CD4-positive, alpha-beta memory T cell (primary cell): ENCODE measurements at regions of chr5 and their contacts with region 1.

Region 1: GRCh38 chr5:157431544-157432200 is 28.3 kb upstream of the NIPAL4 start:
- DNase-seq: peak; percentile 49 to 63 (median 59)
- H3K4me3 ChIP-seq: no peak overlapping the region
- H3K4me3 Mint-ChIP-seq: peak overlapping the region in 4 of 8 donors; percentile 17 to 65 (median 42)
- H3K27ac ChIP-seq: no peak overlapping the region
- H3K27ac Mint-ChIP-seq: peak overlapping the region in 6 of 7 donors; percentile 3 to 83 (median 77)
- H3K4me1 ChIP-seq: peaks cover 4% of the 10 kb centered on the region
- H3K4me1 Mint-ChIP-seq: peaks cover 5 to 7% (median 5%) of the 10 kb centered on the region in 4 donors
- H3K27me3 ChIP-seq: no peaks in the 10 kb centered on the region
- H3K27me3 Mint-ChIP-seq: no peaks in the 10 kb centered on the region

Region 2: DNA sequence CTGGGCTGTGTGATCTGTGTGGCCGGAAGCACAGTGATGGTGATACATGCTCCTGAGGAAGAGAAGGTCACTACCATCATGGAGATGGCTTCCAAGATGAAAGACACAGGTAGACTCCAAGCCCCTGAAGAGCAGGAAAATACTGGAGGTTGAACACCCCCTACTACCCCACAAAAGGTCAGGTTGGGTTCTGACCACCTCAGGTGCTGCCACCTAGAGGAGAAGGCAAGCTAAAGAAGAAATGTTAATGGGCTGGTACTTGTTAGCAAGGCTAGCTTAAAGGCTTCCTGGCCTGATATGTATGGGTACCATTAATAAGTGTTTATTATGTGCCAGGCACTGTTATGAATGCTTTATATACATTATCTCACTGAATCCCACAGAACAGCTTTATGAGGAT is 40.0 kb after region 1 on chr5:
- CTCF ChIA-PET with region 1: interaction called, 33 read pairs
- POLR2A ChIA-PET with region 1: interaction called, 3 read pairs
- intact Hi-C with region 1: loop called (anchors 2 kb)
- DNase-seq: no peak
- H3K4me3 ChIP-seq: no peak overlapping the region
- H3K4me3 Mint-ChIP-seq: no peak overlapping the region
- H3K27ac ChIP-seq: no peak overlapping the region
- H3K27ac Mint-ChIP-seq: no peak overlapping the region
- H3K4me1 ChIP-seq: no peaks in the 10 kb centered on the region
- H3K4me1 Mint-ChIP-seq: peaks cover under 1 to 4% (median 4%) of the 10 kb centered on the region in 4 donors
- H3K27me3 ChIP-seq: no peaks in the 10 kb centered on the region
- H3K27me3 Mint-ChIP-seq: no peaks in the 10 kb centered on the region

Region 3: GRCh38 chr5:157476702-157477408 is 45.2 kb after region 1 on chr5:
- CTCF ChIA-PET with region 1: interaction called, 33 read pairs
- POLR2A ChIA-PET with region 1: interaction called, 3 read pairs
- intact Hi-C with region 1: loop called (anchors 2 kb)
- DNase-seq: peak in 4 of 5 donors; percentile 19 to 36 (median 28)
- H3K4me3 ChIP-seq: no peak overlapping the region
- H3K4me3 Mint-ChIP-seq: no peak overlapping the region
- H3K27ac ChIP-seq: no peak overlapping the region
- H3K27ac Mint-ChIP-seq: peak overlapping the region in 5 of 7 donors; percentile 20 to 70 (median 50)
- H3K4me1 ChIP-seq: peaks cover 35% of the 10 kb centered on the region
- H3K4me1 Mint-ChIP-seq: peaks cover 23 to 45% (median 29%) of the 10 kb centered on the region in 4 donors
- H3K27me3 ChIP-seq: no peaks in the 10 kb centered on the region
- H3K27me3 Mint-ChIP-seq: no peaks in the 10 kb centered on the region

Region 4: DNA sequence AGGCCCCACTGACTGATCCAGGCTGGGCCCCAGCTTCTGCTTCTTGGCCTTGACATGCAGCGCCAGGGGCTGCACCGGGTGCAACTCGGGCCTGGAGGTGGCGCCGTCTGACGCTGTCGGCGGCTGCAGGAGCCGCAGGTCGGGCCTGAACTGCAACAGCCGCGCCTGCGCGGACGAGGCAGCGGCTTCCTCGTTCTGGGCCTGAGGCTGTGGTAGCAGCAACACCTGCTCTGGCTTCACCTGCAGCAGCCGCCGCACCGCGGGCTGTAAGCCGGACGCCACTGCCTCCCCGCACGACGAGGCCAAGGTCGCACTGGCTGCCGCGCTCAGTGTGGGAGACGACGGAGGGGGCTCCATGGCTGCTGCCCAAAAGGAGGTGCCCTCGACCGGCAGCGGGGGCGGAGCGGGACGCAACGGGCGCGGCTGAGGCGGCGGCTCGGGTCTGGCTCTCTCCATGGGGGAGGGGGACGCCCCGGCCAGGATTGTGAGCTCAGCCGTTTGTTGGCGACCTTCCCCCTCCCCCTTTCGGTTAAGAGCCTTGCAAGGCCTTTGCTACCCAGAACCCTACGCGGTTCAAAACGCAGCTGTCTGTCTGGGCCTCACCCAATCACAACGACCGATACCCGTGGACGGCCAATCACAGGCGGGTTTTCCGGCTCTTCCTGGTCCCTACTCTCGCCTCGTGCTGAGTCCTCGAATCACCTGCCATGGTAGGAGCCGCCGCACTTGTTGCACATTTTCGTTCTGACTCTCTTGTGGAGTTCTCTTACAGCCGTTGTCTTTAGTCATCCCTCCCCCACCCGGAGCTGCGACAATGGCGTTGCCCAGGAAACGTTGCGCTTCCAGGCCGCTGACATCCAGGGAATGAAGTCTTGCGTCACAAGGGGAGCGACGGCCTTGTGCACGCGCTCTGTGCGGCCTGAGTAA is 220.2 kb after region 1 on chr5 and contains the start of gene SOX30:
- CTCF ChIA-PET with region 1: interaction called, 3 read pairs
- POLR2A ChIA-PET with region 1: no interaction called
- intact Hi-C with region 1: loop called (anchors 5 kb)
- DNase-seq: peak; percentile 85 to 89 (median 86)
- H3K4me3 ChIP-seq: peak within 1 kb of the TSS in 1 of 2 donors; percentile 51
- H3K4me3 Mint-ChIP-seq: peak within 1 kb of the TSS; percentile 78 to 89 (median 84)
- H3K27ac ChIP-seq: peak within 1 kb of the TSS; percentile 52
- H3K27ac Mint-ChIP-seq: peak within 1 kb of the TSS; percentile 65 to 91 (median 86)
- H3K4me1 ChIP-seq: peaks cover 18% of the 10 kb centered on the region
- H3K4me1 Mint-ChIP-seq: peaks cover 11 to 26% (median 18%) of the 10 kb centered on the region in 4 donors
- H3K27me3 ChIP-seq: no peaks in the 10 kb centered on the region
- H3K27me3 Mint-ChIP-seq: no peaks in the 10 kb centered on the region
- total RNA-seq, gene SOX30: 0.14 to 0.15 TPM

Region 5: DNA sequence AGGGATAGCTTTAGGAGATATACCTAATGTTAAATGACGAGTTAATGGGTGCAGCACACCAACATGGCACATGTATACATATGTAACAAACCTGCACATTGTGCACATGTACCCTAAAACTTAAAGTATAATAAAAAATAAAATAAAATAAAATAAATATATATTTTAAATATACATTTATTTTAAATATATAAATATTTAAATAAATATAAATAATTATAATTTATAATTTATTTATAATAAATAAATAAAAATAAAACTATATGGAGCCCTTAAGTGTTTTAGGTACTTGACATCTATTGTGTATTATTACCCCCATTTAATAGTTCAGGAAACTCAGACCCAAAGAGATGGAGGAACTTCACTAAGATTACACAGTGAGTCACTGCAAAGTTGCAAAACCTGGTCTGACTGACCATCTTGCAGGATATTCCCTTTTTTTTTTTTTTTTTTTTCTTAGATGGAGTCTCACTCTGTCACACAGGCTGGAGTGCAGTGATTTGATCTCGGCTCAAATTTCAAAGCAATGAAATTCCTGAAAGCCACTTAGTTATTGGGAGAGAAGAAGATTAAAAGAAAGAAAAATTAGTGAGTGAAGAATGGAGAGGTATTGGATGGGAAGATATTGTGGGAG is 233.9 kb after region 1 on chr5:
- CTCF ChIA-PET with region 1: interaction called, 5 read pairs
- POLR2A ChIA-PET with region 1: no interaction called
- intact Hi-C with region 1: loop called (anchors 5 kb)
- DNase-seq: no peak
- H3K4me3 ChIP-seq: no peak overlapping the region
- H3K4me3 Mint-ChIP-seq: no peak overlapping the region
- H3K27ac ChIP-seq: no peak overlapping the region
- H3K27ac Mint-ChIP-seq: no peak overlapping the region
- H3K4me1 ChIP-seq: peaks cover 6% of the 10 kb centered on the region
- H3K4me1 Mint-ChIP-seq: peaks cover 9 to 10% (median 9%) of the 10 kb centered on the region in 4 donors
- H3K27me3 ChIP-seq: no peaks in the 10 kb centered on the region
- H3K27me3 Mint-ChIP-seq: no peaks in the 10 kb centered on the region